ENCODE measurements at regions of chr7 and their contacts with region 1.

Region 1: GRCh38 chr7:75694638-75695399 is 43.9 kb downstream of the HIP1 start:
- ATAC-seq: no peak
- H3K4me3 ChIP-seq: no peak overlapping the region
- H3K27ac ChIP-seq: no peak overlapping the region
- H3K4me1 ChIP-seq: no peaks in the 10 kb centered on the region

Region 2: GRCh38 chr7:73738612-73739374 is 1956.0 kb before region 1 on chr7 and contains the start of gene ABHD11:
- in situ Hi-C with region 1: no loop called
- ATAC-seq: peak; percentile 71 to 90 (median 84)
- H3K4me3 ChIP-seq: peak within 1 kb of the TSS; percentile 54 to 66 (median 62)
- H3K27ac ChIP-seq: peak within 1 kb of the TSS; percentile 70 to 78
- H3K4me1 ChIP-seq: peaks cover 22 to 29% of the 10 kb centered on the region in 2 donors
- total RNA-seq, gene ABHD11: 6.4 to 22.0 (median 13.3) TPM

Region 3: DNA sequence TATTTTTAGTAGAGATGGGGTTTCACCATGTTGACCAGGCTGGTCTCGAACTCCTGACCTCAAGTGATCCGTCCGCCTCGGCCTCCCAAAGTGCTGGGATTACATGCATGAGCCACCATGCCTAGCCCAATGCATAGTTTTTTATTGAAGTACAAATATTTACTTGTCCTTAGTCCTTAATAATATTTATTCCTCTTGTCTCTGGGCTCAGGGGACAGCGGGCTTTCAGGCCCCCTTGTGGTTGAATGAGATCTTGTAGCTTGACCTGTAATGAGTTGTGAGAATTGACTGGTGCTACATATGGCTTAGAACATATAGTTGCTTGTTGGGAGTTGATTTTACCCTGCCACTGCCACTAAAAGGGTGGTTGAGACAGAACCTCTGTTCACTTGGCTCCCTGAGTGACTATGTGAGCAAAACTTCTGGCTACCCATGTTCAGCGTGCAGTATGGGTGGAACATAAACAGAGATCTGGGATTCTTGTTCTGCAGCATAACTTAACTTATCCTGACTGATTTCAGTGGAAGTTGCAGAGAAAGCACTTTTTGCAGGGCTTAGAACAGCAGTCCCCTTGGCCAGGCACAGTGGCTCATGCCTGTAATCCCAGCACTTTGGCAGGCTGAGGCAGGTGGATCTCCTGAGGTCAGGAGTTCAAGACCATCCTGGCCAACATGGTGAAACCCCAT is 62.3 kb after region 1 on chr7:
- in situ Hi-C with region 1: loop called in 1 of 9 experiments (anchors 10 kb)
- ATAC-seq: peak in 3 of 8 experiments; percentile 50 to 59 (median 54)
- H3K4me3 ChIP-seq: no peak overlapping the region
- H3K27ac ChIP-seq: no peak overlapping the region
- H3K4me1 ChIP-seq: peaks cover 0 to 3% of the 10 kb centered on the region in 2 donors